GM12878 (cell line): ENCODE measurements at regions of chr17 and their contacts with region 1.

Region 1: GRCh38 chr17:78013683-78014467 is 55.4 kb downstream of the TNRC6C start:
- DNase-seq: peak; percentile 20
- ATAC-seq: peak; percentile 74
- H3K4me3 ChIP-seq: no peak overlapping the region
- H3K27ac ChIP-seq: no peak overlapping the region
- H3K4me1 ChIP-seq: no peaks in the 10 kb centered on the region
- H3K27me3 ChIP-seq: no peaks in the 10 kb centered on the region
- CTCF ChIP-seq: peak; percentile 67 to 89 (median 79)
- EP300 ChIP-seq: no peak
- POLR2A ChIP-seq: no peak
- RAD21 ChIP-seq: peak; percentile 94

Region 2: GRCh38 chr17:77365584-77366186 is 648.2 kb before region 1 on chr17:
- CTCF ChIA-PET with region 1: no interaction called
- POLR2A ChIA-PET with region 1: no interaction called
- RAD21 ChIA-PET with region 1: no interaction called
- SMC1A ChIA-PET with region 1: no interaction called
- in situ Hi-C with region 1: no loop called
- intact Hi-C with region 1: no loop called
- DNase-seq: no peak
- ATAC-seq: peak; percentile 22; the same call in 2 of the 3 replicates
- H3K4me3 ChIP-seq: no peak overlapping the region
- H3K27ac ChIP-seq: peak overlapping the region; percentile 26
- H3K4me1 ChIP-seq: peaks cover 23% of the 10 kb centered on the region
- H3K27me3 ChIP-seq: no peaks in the 10 kb centered on the region
- CTCF ChIP-seq: no peak
- EP300 ChIP-seq: no peak
- POLR2A ChIP-seq: no peak
- RAD21 ChIP-seq: no peak

Region 3: GRCh38 chr17:77535435-77535834 is 478.4 kb before region 1 on chr17:
- CTCF ChIA-PET with region 1: interaction called, 58 read pairs
- POLR2A ChIA-PET with region 1: no interaction called
- RAD21 ChIA-PET with region 1: no interaction called
- SMC1A ChIA-PET with region 1: interaction called, 3 read pairs
- in situ Hi-C with region 1: loop called (anchors 5 kb)
- intact Hi-C with region 1: no loop called
- DNase-seq: no peak
- ATAC-seq: no peak
- H3K4me3 ChIP-seq: no peak overlapping the region
- H3K27ac ChIP-seq: no peak overlapping the region
- H3K4me1 ChIP-seq: no peaks in the 10 kb centered on the region
- H3K27me3 ChIP-seq: peaks cover 0 to 1% of the 10 kb centered on the region in 2 experiments; a peak in 1 of 4 replicates
- CTCF ChIP-seq: no peak
- EP300 ChIP-seq: no peak
- POLR2A ChIP-seq: no peak
- RAD21 ChIP-seq: no peak

Region 4: DNA sequence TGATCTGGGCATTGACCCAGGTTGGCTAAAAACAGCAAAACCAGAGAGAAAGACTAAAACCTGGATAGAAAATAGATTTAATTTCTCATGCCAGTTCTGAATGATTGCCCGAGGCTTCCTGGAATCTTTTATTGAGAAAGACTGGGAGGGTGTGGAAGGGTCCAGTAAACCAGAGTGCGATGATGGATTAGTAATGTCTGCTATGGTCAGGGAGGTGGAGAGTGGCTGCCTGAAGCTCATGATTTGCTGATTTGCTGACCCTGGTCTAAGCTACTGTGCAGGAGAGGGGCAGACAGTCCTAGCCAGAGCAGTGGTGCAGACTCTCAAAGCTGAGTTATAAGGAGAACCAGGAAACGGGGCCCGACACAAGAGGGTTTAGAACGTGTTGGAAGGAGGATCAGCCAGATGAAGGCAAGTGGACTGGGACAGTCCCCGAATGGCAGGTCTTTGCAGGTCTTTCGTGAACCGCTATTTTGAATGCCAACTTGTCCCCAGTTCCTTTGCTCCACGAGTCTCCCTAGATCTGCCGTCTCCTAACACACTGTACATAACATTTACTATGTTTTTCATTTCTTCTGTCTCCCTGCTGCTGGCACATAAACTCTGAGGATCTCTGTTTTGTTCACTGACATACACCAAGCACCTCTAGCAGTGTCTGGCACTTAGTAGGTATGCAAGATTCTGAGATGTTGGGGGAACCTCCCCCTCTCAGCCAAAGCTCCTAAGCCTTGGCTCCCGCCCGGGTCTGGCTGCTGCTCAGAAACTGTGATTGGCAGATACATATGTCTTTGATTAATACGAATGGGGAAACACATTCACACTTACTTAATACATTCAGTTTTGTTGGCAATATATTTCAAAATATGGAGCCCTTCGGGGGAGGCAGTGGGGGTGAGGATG is 292.7 kb before region 1 on chr17:
- CTCF ChIA-PET with region 1: no interaction called
- POLR2A ChIA-PET with region 1: no interaction called
- RAD21 ChIA-PET with region 1: no interaction called
- SMC1A ChIA-PET with region 1: no interaction called
- in situ Hi-C with region 1: no loop called
- intact Hi-C with region 1: no loop called
- DNase-seq: no peak
- ATAC-seq: no peak
- H3K4me3 ChIP-seq: no peak overlapping the region
- H3K27ac ChIP-seq: no peak overlapping the region
- H3K4me1 ChIP-seq: no peaks in the 10 kb centered on the region
- H3K27me3 ChIP-seq: no peaks in the 10 kb centered on the region
- CTCF ChIP-seq: no peak
- EP300 ChIP-seq: no peak
- POLR2A ChIP-seq: no peak
- RAD21 ChIP-seq: no peak

Region 5: GRCh38 chr17:77772461-77772897 is 241.4 kb before region 1 on chr17:
- CTCF ChIA-PET with region 1: interaction called, 111 read pairs
- POLR2A ChIA-PET with region 1: no interaction called
- RAD21 ChIA-PET with region 1: interaction called, 10 read pairs
- SMC1A ChIA-PET with region 1: interaction called, 25 read pairs
- in situ Hi-C with region 1: loop called (anchors 5 kb)
- intact Hi-C with region 1: loop called (anchors 1 kb)
- DNase-seq: no peak
- ATAC-seq: peak; percentile 99
- H3K4me3 ChIP-seq: no peak overlapping the region
- H3K27ac ChIP-seq: no peak overlapping the region
- H3K4me1 ChIP-seq: no peaks in the 10 kb centered on the region
- H3K27me3 ChIP-seq: no peaks in the 10 kb centered on the region
- CTCF ChIP-seq: peak; percentile 79 to 96 (median 92)
- EP300 ChIP-seq: no peak
- POLR2A ChIP-seq: no peak
- RAD21 ChIP-seq: peak; percentile 78

Region 6: GRCh38 chr17:77881545-77881944 is 132.3 kb before region 1 on chr17:
- CTCF ChIA-PET with region 1: interaction called, 10 read pairs
- POLR2A ChIA-PET with region 1: no interaction called
- RAD21 ChIA-PET with region 1: interaction called, 10 read pairs
- SMC1A ChIA-PET with region 1: no interaction called
- in situ Hi-C with region 1: no loop called
- intact Hi-C with region 1: no loop called
- DNase-seq: peak; percentile 89
- ATAC-seq: peak; percentile 96
- H3K4me3 ChIP-seq: peak overlapping the region; percentile 4; the same call in 1 of the 2 replicates
- H3K27ac ChIP-seq: no peak overlapping the region; the same call in 1 of the 2 replicates
- H3K4me1 ChIP-seq: peaks cover 21% of the 10 kb centered on the region
- H3K27me3 ChIP-seq: no peaks in the 10 kb centered on the region; a peak in 2 of 4 replicates
- CTCF ChIP-seq: no peak
- EP300 ChIP-seq: peak; percentile 70 to 90; a peak in 3 of 4 replicates
- POLR2A ChIP-seq: no peak
- RAD21 ChIP-seq: peak; percentile 29; the same call in 1 of the 2 replicates

Region 7: DNA sequence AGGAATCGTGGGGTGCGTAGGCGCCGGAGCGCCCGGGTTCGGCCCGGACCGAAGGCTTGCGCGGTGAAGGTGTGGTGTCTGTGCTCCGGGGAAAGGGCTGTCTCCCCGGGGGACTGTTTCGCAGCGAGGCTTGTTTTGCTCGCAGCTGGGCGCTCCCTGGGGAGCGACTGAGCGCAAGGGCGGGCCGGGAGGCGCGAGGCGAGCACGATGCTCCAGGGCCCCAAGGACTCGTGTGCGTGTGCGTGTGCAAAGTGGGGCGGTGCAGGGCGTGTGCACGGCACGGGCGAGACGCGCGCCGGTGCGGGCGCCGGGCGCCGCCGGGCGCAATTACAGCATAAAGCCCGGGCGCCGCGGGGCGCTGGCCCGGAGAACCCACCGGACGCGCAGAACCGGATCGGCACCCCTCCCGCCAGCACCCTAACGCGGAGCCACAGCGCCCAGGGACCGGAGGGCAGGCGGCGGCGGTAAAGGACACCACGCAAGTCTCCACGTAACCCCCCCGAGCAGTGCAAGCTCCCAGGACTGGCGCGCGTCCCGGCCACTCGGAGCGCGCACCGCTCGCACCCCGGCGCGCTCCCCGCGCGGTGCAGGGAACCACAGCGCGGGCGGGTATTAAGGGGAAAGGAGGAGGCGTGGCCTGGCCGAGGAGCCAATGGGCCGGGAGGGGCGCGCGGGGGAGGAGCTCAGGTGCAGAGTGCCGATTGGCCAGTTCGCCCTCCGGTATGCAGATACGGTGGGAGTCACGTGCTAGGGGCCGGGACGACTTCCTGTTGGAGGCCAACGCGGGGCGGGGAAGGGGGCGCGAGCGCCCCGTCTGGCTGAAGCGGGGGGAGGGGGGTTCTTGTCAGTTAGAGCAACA is 55.8 kb before region 1 on chr17 and contains the start of gene TNRC6C:
- CTCF ChIA-PET with region 1: interaction called, 8 read pairs
- POLR2A ChIA-PET with region 1: interaction called, 4 read pairs
- RAD21 ChIA-PET with region 1: interaction called, 24 read pairs
- SMC1A ChIA-PET with region 1: interaction called, 6 read pairs
- in situ Hi-C with region 1: no loop called
- intact Hi-C with region 1: no loop called
- DNase-seq: peak; percentile 87
- ATAC-seq: peak; percentile 96
- H3K4me3 ChIP-seq: peak within 1 kb of the TSS; percentile 75
- H3K27ac ChIP-seq: no peak within 1 kb of the TSS
- H3K4me1 ChIP-seq: peaks cover 16% of the 10 kb centered on the region
- H3K27me3 ChIP-seq: peaks cover 0 to 3% of the 10 kb centered on the region in 2 experiments; a peak in 2 of 4 replicates
- CTCF ChIP-seq: peak in 2 of 3 experiments; percentile 20 to 38; a peak in 3 of 6 replicates
- EP300 ChIP-seq: no peak; a peak in 2 of 4 replicates
- POLR2A ChIP-seq: peak; percentile 100
- RAD21 ChIP-seq: no peak
- polyA plus RNA-seq, gene TNRC6C: 0.40 to 0.43 TPM

Region 8: GRCh38 chr17:78000341-78000740 is 13.5 kb before region 1 on chr17:
- CTCF ChIA-PET with region 1: interaction called, 25 read pairs
- POLR2A ChIA-PET with region 1: no interaction called
- RAD21 ChIA-PET with region 1: interaction called, 8 read pairs
- SMC1A ChIA-PET with region 1: interaction called, 35 read pairs
- in situ Hi-C with region 1: no loop called
- intact Hi-C with region 1: no loop called
- DNase-seq: no peak
- ATAC-seq: no peak
- H3K4me3 ChIP-seq: no peak overlapping the region
- H3K27ac ChIP-seq: no peak overlapping the region
- H3K4me1 ChIP-seq: no peaks in the 10 kb centered on the region
- H3K27me3 ChIP-seq: no peaks in the 10 kb centered on the region
- CTCF ChIP-seq: no peak
- EP300 ChIP-seq: no peak
- POLR2A ChIP-seq: no peak
- RAD21 ChIP-seq: no peak